Activated CD4-positive, alpha-beta T cell treated with anti-CD3 and anti-CD28 coated beads, Interleukin-2, amount 10 ng/mL, durations not matched to agents 7 days and 5 days (primary cell): ENCODE measurements at regions of chr16 and their contacts with region 1.

Region 1: DNA sequence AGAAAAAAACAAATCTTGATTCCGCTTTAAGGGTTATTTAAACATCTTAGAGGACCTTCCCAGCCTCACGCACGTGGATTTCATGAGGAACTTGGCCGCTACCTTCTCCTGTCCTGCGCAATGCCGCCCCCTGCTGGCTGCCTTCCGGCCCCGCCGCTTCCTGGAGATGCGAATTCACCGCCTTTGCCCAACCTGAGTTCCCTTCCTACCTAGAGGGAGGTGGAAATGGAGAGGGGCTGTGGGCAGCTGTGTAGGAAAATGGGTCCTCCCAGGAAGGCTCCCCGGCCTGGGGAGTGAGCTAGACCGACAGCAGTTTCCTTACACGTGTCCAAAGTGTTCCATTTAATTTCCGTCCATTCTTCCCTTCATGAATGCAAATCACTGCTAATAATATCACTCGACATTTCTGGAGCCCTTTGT is 1.0 kb upstream of the ABCC12 start:
- DNase-seq: peak; percentile 82
- H3K4me3 Mint-ChIP-seq: no peak overlapping the region
- H3K27ac Mint-ChIP-seq: no peak overlapping the region
- H3K4me1 Mint-ChIP-seq: peaks cover 14% of the 10 kb centered on the region
- H3K27me3 Mint-ChIP-seq: peaks cover 21% of the 10 kb centered on the region

Region 2: GRCh38 chr16:48143812-48144368 is 12.9 kb before region 1 on chr16:
- CTCF ChIA-PET with region 1: no interaction called
- POLR2A ChIA-PET with region 1: no interaction called
- DNase-seq: no peak
- H3K4me3 Mint-ChIP-seq: no peak overlapping the region
- H3K27ac Mint-ChIP-seq: no peak overlapping the region
- H3K4me1 Mint-ChIP-seq: no peaks in the 10 kb centered on the region
- H3K27me3 Mint-ChIP-seq: peaks cover 6% of the 10 kb centered on the region

Region 3: DNA sequence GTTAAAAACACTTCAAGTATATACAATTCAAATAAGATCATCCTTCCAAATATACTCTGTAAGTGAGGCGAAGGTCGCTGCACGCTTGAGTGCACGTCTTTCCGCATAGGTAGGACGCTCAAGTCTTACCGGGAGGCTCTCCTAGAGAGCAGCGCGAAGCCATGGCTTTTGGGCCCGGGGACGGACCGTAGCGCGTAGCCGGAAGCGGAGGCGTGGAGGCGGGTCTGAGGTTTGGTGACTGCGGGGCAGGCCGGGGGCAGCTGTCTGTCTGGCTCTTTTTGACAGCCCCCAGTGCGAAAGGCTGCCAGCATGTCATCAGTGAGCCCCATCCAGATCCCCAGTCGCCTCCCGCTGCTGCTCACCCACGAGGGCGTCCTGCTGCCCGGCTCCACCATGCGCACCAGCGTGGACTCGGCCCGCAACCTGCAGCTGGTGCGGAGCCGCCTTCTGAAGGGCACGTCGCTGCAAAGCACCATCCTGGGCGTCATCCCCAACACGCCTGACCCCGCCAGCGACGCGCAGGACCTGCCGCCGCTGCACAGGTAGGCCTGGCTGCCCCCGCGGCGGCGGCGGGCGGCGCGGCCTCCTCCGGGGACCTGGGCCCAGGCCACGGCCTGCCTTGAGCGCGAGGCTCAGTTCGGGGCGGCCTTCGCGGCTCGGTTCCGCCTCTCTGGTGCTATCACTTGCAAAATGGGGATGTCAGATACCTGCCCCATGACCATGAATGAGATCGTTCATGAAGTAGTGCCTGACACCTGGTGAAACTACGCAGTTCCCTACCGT is 87.5 kb after region 1 on chr16 and contains the start of gene LONP2:
- CTCF ChIA-PET with region 1: no interaction called
- POLR2A ChIA-PET with region 1: interaction called, 10 read pairs
- DNase-seq: peak; percentile 90
- H3K4me3 Mint-ChIP-seq: peak within 1 kb of the TSS; percentile 94
- H3K27ac Mint-ChIP-seq: peak within 1 kb of the TSS; percentile 95
- H3K4me1 Mint-ChIP-seq: peaks cover 35% of the 10 kb centered on the region
- H3K27me3 Mint-ChIP-seq: no peaks in the 10 kb centered on the region
- total RNA-seq, gene LONP2: 62.8 to 68.2 TPM